ENCODE measurements at regions of chr6 and their contacts with region 1.

Region 1: GRCh38 chr6:24581084-24581669 is 64.8 kb downstream of the KIAA0319 start:
- DNase-seq: peak; percentile 38
- H3K4me3 ChIP-seq: no peak overlapping the region
- H3K27ac ChIP-seq: no peak overlapping the region
- H3K4me1 ChIP-seq: no peaks in the 10 kb centered on the region
- H3K27me3 ChIP-seq: no peaks in the 10 kb centered on the region
- CTCF ChIP-seq: peak; percentile 84 to 93

Region 2: DNA sequence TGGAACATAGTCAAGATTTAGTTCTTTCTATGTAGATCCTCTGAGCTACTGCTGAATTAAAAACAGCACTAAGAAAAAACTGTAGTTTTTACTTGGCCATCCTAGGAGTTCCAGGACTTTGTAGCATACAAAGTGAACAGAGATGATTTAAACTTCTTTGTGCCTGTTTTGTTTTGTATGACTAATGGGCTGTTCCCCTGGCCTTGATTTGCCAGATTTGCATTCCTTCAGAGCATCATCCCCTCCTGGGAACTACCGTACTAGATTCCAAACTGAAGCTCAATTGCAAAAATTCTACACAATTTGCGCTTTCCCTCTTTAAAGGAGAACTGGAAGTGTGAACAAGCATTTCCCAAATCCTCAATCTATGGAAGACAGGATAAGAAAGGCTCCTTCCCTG is 108.8 kb after region 1 on chr6:
- CTCF ChIA-PET with region 1: no interaction called
- dilution Hi-C with region 1: no loop called
- in situ Hi-C with region 1: loop called (anchors 5 kb)
- intact Hi-C with region 1: loop called (anchors 1 kb)
- DNase-seq: no peak
- H3K4me3 ChIP-seq: no peak overlapping the region
- H3K27ac ChIP-seq: no peak overlapping the region
- H3K4me1 ChIP-seq: no peaks in the 10 kb centered on the region
- H3K27me3 ChIP-seq: no peaks in the 10 kb centered on the region
- CTCF ChIP-seq: no peak

Region 3: GRCh38 chr6:24766680-24767462 is 185.7 kb after region 1 on chr6:
- CTCF ChIA-PET with region 1: no interaction called
- dilution Hi-C with region 1: no loop called
- in situ Hi-C with region 1: loop called (anchors 5 to 25 kb)
- intact Hi-C with region 1: loop called (anchors 1 kb)
- DNase-seq: peak; percentile 20
- H3K4me3 ChIP-seq: no peak overlapping the region
- H3K27ac ChIP-seq: no peak overlapping the region
- H3K4me1 ChIP-seq: peaks cover 4% of the 10 kb centered on the region
- H3K27me3 ChIP-seq: no peaks in the 10 kb centered on the region
- CTCF ChIP-seq: peak; percentile 39 to 49

Region 4: DNA sequence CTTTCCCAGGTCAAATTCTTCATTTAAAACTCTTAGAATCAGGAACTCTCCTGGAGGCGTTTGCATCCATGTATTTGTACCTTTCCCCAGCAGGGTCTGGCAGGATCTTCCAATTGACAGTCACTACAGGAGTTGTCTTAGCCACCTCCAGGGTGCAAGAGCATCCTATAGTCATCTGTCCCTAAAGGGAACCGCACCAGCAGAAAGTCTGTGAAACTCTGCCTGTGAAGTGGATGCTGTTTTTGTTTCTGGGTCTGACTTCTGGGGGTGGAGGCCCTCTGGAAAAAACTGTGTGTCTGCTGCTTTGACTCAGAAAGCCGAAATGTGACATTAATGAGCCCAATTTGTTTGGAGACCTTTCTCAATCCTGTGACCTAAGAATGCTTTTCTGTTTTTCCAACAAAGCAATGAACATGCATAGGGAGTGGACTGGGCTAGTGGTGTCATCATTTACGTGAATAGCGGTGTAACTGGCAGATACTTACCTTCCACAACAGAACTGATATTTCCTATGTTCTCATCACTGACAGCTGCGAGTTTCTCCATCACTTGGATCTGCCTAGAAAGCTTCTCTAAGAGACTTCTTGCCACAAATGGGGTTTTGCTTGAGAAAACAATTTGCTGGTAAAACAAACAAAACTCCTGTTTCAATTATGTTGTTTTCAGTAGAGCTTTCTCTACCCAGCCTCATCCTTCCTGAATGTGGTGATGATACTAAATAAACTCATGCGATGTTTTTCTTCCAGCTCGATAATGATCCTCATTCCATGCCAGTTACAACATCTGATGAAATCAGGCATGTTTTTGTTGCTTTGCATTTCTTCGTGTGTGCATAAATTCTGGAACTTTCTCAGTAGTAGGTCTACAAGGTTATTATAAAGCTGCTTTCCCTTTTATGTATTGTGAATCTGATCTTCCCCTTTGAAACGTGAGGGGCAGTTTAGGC is 250.9 kb after region 1 on chr6:
- CTCF ChIA-PET with region 1: no interaction called
- dilution Hi-C with region 1: no loop called
- in situ Hi-C with region 1: no loop called
- intact Hi-C with region 1: loop called (anchors 2 kb)
- DNase-seq: no peak
- H3K4me3 ChIP-seq: no peak overlapping the region
- H3K27ac ChIP-seq: no peak overlapping the region
- H3K4me1 ChIP-seq: peaks cover 14% of the 10 kb centered on the region
- H3K27me3 ChIP-seq: no peaks in the 10 kb centered on the region
- CTCF ChIP-seq: no peak

Measured in mammary epithelial cell (primary cell).